Ascending aorta (tissue), 2 donors: ENCODE measurements at regions of chr4 and their contacts with region 1.

Region 1: GRCh38 chr4:139651282-139652194 is 14.1 kb upstream of the MGST2 start:
- DNase-seq: peak in 1 of 2 donors; percentile 90
- H3K4me3 ChIP-seq: peak overlapping the region; percentile 25 to 43
- H3K27ac ChIP-seq: no peak overlapping the region
- H3K4me1 ChIP-seq: no peaks in the 10 kb centered on the region
- H3K27me3 ChIP-seq: no peaks in the 10 kb centered on the region
- CTCF ChIP-seq: peak; percentile 81 to 90 (median 85)

Region 2: GRCh38 chr4:139030614-139031235 is 620.8 kb before region 1 on chr4:
- intact Hi-C with region 1: loop called (anchors 10 kb)
- DNase-seq: peak in 1 of 2 donors; percentile 82
- H3K4me3 ChIP-seq: no peak overlapping the region
- H3K27ac ChIP-seq: no peak overlapping the region
- H3K4me1 ChIP-seq: no peaks in the 10 kb centered on the region
- H3K27me3 ChIP-seq: no peaks in the 10 kb centered on the region
- CTCF ChIP-seq: peak; percentile 52 to 82 (median 75)

Region 3: DNA sequence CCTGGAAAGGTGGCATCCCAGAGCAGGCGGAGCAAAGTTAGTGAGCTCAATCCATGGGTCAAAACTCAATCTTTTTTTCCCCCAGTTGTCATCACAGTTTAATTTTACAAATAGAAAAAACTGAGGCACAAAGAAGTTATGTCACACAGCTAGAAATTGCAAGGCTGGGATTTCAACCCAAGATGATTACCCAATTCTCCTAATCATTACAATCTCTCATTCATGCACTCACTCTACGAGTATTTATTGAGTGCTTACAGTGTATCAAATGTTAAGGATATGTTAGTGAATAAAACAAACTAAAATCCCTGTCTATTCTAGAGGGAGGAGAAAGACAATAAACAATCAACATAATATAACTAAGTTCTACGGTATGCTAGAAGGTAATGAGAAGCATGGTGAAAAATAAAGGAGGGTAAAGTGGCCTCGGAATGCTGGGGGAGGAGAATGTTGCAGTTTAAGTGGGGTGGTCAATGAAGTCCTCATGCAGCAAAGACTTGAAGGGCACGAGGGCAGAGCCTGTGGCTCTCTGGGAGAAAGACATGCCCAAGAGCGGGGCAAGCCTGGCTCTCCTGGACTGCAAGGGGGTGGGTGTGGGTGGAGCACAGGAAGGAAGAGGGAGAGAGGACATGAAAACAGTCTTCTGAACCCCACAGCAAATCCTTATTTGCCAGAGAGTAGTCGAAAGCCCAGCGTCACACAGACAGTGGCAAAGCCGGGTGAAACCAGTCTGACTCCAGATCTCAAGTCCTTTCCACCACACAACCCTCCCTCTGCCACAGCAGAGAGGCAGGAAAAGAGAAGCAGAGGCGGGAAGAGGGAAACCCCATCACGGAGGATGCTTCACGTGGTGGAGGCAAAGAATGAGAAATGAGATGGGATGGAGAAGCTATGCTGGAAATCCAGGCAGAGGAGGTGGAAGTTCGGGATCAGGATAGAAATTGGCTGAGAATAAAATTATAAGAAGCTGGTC is 149.3 kb before region 1 on chr4:
- intact Hi-C with region 1: loop called (anchors 2 kb)
- DNase-seq: no peak
- H3K4me3 ChIP-seq: no peak overlapping the region
- H3K27ac ChIP-seq: no peak overlapping the region
- H3K4me1 ChIP-seq: no peaks in the 10 kb centered on the region
- H3K27me3 ChIP-seq: no peaks in the 10 kb centered on the region
- CTCF ChIP-seq: no peak

Region 4: DNA sequence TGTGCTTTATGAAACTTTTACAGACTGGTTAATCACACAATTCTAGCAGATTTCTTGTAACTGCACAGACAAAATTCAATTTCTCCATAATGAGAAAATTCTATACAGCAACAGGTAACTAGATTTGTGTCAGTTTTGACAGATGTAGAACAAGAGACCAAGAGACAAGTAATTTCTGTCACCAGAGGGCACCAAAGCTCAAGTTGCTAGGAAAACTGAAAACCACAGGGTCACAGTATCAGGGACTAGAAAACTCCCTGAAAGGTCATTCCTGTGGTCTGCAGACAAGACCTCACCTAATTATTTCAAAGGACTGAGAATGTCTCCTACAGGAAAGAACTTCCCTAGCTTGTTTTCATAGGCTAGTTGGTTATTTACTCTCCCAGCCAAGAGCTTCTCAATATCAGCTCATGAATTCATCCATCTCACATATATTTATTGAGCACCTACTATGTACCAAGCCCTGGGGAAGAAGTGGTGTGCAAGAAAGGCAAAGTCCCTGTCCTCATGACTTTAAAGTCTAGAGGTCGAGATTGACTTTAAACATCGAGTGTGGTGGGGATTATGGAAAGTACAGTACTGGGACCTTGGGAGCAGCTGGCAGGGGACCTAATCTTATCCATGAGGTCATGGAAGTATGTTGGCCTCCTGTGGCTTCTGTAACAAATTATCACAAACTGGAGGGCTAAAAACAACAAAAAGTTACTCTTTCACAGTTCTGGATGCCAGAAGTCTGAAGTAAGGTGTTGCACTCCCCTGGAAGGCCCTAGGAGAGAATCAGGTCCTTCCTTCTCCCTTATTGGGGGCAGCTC is 47.8 kb before region 1 on chr4:
- intact Hi-C with region 1: loop called (anchors 2 kb)
- DNase-seq: no peak
- H3K4me3 ChIP-seq: no peak overlapping the region
- H3K27ac ChIP-seq: no peak overlapping the region
- H3K4me1 ChIP-seq: no peaks in the 10 kb centered on the region
- H3K27me3 ChIP-seq: no peaks in the 10 kb centered on the region
- CTCF ChIP-seq: peak; percentile 52 to 67 (median 62)

Region 5: DNA sequence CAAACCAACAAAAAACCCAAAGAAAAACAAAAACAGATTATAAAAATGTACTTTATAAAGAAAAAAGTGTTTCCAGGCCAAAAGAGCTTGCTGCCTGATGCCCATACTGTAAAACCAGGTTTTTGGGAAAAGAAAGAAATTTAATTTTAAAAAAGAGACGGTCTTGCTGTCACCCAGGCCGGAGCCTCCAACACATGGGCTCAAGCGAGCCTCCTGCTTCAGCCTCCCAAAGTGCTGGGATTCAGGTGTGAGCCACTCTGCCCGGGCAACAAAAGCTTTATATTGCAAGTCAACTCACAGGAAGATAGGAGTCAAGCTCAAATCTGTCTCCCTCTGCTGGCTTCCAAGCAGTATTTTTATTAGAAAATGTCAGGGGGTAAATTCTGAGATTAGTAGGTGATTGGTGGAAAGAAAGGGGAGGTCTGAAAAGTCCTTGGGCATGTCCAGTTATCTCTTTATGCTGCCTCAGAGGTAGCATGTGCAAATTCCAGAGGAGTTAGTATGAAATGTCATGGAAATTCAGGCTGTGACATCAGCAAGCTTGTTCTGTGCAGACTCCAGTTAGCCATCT is 53.5 kb after region 1 on chr4:
- intact Hi-C with region 1: no loop called
- DNase-seq: no peak
- H3K4me3 ChIP-seq: no peak overlapping the region
- H3K27ac ChIP-seq: no peak overlapping the region
- H3K4me1 ChIP-seq: no peaks in the 10 kb centered on the region
- H3K27me3 ChIP-seq: no peaks in the 10 kb centered on the region
- CTCF ChIP-seq: no peak

Region 6: GRCh38 chr4:140018931-140019618 is 367.5 kb after region 1 on chr4:
- intact Hi-C with region 1: no loop called
- DNase-seq: no peak
- H3K4me3 ChIP-seq: no peak overlapping the region
- H3K27ac ChIP-seq: no peak overlapping the region
- H3K4me1 ChIP-seq: peaks cover 0 to 6% of the 10 kb centered on the region in 2 donors
- H3K27me3 ChIP-seq: no peaks in the 10 kb centered on the region
- CTCF ChIP-seq: no peak